ENCODE measurements at regions of chr11 and their contacts with region 1.

Region 1: GRCh38 chr11:59158206-59159068 is 13.5 kb upstream of the DTX4 start:
- DNase-seq: peak; percentile 75
- ATAC-seq: peak; percentile 97
- H3K4me3 ChIP-seq: no peak overlapping the region
- H3K27ac ChIP-seq: no peak overlapping the region
- H3K4me1 ChIP-seq: no peaks in the 10 kb centered on the region
- H3K27me3 ChIP-seq: peaks cover 7% of the 10 kb centered on the region
- CTCF ChIP-seq: peak; percentile 92
- POLR2A ChIP-seq: no peak
- RAD21 ChIP-seq: peak; percentile 89

Region 2: GRCh38 chr11:58675334-58676155 is 482.9 kb before region 1 on chr11:
- CTCF ChIA-PET with region 1: no interaction called
- POLR2A ChIA-PET with region 1: no interaction called
- dilution Hi-C with region 1: no loop called
- in situ Hi-C with region 1: no loop called
- intact Hi-C with region 1: loop called (anchors 5 kb)
- DNase-seq: peak; percentile 59
- ATAC-seq: peak; percentile 100
- H3K4me3 ChIP-seq: no peak overlapping the region
- H3K27ac ChIP-seq: no peak overlapping the region
- H3K4me1 ChIP-seq: no peaks in the 10 kb centered on the region
- H3K27me3 ChIP-seq: peaks cover 4% of the 10 kb centered on the region
- CTCF ChIP-seq: peak; percentile 91
- POLR2A ChIP-seq: no peak
- RAD21 ChIP-seq: peak; percentile 81

Region 3: GRCh38 chr11:58900479-58901420 is 257.7 kb before region 1 on chr11:
- CTCF ChIA-PET with region 1: interaction called, 3 read pairs
- POLR2A ChIA-PET with region 1: no interaction called
- dilution Hi-C with region 1: no loop called
- in situ Hi-C with region 1: loop called (anchors 10 kb)
- intact Hi-C with region 1: no loop called
- DNase-seq: peak; percentile 73
- ATAC-seq: peak; percentile 57
- H3K4me3 ChIP-seq: no peak overlapping the region
- H3K27ac ChIP-seq: no peak overlapping the region
- H3K4me1 ChIP-seq: no peaks in the 10 kb centered on the region; the same call in 1 of the 2 replicates
- H3K27me3 ChIP-seq: no peaks in the 10 kb centered on the region
- CTCF ChIP-seq: peak; percentile 74
- POLR2A ChIP-seq: no peak
- RAD21 ChIP-seq: peak; percentile 62

Region 4: DNA sequence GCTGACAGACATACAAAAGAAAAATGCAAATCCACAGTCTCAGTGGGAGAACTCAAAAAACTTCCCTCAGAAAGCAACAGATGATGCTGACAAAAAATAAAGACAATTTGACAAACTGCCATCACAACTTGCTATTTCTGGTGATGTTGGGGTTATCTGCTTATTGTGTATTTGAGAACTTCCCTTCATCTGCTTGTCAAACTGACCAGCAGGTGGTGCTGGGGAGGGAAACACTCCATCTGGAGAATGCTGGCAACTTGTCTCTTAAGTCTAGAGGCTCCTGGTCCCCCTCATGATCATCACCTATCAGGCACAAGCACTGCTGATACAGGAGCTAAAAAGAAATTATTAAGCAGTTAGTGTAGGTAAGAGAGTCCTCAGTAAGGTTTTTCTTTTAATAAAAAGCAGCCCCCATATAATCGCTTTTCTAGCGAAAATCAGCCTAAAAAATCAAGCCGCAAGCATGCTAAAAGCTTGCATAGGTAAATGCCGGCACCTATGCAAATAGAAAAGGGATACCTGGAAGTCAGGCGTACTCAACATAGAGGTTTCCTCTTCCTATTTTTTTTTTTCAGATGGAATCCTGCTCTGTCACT is 61.2 kb before region 1 on chr11:
- CTCF ChIA-PET with region 1: interaction called, 5 read pairs
- POLR2A ChIA-PET with region 1: no interaction called
- dilution Hi-C with region 1: no loop called
- in situ Hi-C with region 1: no loop called
- intact Hi-C with region 1: loop called (anchors 1 kb)
- DNase-seq: peak; percentile 62
- ATAC-seq: peak; percentile 81
- H3K4me3 ChIP-seq: no peak overlapping the region
- H3K27ac ChIP-seq: no peak overlapping the region
- H3K4me1 ChIP-seq: no peaks in the 10 kb centered on the region
- H3K27me3 ChIP-seq: peaks cover 9% of the 10 kb centered on the region
- CTCF ChIP-seq: peak; percentile 69
- POLR2A ChIP-seq: no peak
- RAD21 ChIP-seq: peak; percentile 52

Region 5: DNA sequence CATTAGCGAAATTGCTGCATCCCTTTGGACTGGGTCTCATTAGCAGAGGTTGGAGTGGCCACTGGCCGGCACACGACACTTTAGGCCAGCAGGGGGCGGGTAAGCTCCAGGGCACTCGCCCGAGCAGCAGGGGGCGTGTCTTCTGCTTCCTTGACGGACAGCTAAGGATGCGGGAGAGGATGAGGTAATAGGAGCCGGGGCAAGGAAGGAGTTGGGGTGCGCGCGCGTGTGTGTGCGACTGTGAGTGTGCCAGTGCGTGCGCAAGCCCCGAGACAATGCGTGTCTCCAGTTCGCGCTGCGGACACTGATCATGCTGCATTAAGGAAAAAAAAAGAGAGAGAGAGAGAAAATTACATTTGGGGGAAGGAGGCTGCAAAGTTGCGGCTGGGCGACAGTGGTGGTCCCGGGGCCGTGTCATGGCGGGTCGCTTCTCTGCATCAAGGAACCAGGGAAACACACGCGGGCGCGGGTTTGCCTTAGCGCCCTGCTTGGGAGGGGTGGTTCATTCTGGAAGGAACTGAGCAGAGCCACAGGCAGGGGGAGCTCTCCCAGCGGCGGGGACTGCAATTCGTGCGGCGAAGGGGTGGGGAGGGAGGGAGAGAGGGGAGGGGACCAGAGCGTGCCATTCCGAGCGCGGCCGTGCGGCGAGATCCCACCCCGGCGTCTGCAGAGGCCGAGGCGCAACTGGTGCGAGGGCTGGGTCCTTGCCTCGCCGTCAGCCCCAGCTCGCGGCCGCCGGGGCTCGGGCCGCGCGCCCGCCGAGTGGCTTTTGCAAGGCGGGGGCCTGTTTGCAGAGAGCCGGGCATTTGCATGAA is 13.3 kb after region 1 on chr11 and contains the start of gene DTX4:
- CTCF ChIA-PET with region 1: interaction called, 12 read pairs
- POLR2A ChIA-PET with region 1: no interaction called
- dilution Hi-C with region 1: no loop called
- in situ Hi-C with region 1: no loop called
- intact Hi-C with region 1: no loop called
- DNase-seq: peak; percentile 86
- ATAC-seq: peak; percentile 87
- H3K4me3 ChIP-seq: peak within 1 kb of the TSS; percentile 54
- H3K27ac ChIP-seq: peak within 1 kb of the TSS; percentile 61
- H3K4me1 ChIP-seq: peaks cover 11% of the 10 kb centered on the region
- H3K27me3 ChIP-seq: peaks cover 3% of the 10 kb centered on the region
- CTCF ChIP-seq: peak; percentile 98
- POLR2A ChIP-seq: peak; percentile 48; the same call in 1 of the 2 replicates
- RAD21 ChIP-seq: peak; percentile 96
- total RNA-seq, gene DTX4: 2.5 and 2.7 TPM in 2 replicates

Measured in IMR-90 (cell line).